ENCODE measurements at regions of chr7 and their contacts with region 1.

Region 1: DNA sequence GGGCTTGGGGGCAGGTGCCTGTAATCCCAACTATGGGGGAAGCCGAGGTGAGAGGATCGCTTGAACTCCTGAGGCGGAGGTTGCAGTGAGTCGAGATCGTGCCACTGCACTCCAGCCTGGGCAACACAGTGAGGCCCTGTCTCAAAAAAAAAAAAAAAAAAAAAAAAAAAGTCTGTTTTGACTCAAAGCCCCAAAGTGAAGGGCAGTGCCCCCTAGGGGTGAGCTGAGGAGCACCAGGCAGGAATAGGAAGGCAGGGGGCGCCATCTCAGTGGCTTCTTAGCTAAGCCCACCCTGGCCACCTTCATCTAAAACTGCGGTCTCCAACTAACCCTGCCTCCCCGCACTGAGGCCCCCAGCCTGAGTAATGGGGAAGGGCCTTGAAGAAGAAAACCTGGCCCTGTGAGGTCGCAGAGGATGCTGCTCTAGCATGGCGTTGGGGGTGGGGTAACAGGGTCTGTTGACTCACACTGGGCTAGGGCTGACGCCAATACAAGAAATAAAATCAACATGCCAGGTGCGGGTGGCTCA is 9.8 kb downstream of the PODXL start:
- DNase-seq: peak; percentile 77 to 81 (median 79)
- H3K4me3 ChIP-seq: no peak overlapping the region
- H3K27ac ChIP-seq: no peak overlapping the region
- H3K4me1 ChIP-seq: peaks cover 0 to 8% (median 5%) of the 10 kb centered on the region in 4 experiments
- H3K27me3 ChIP-seq: peaks cover 0 to 5% (median 0%) of the 10 kb centered on the region in 5 experiments

Region 2: GRCh38 chr7:131431289-131431688 is 115.4 kb before region 1 on chr7:
- CTCF ChIA-PET with region 1: no interaction called
- POLR2A ChIA-PET with region 1: no interaction called
- DNase-seq: no peak
- H3K4me3 ChIP-seq: no peak overlapping the region
- H3K27ac ChIP-seq: no peak overlapping the region
- H3K4me1 ChIP-seq: no peaks in the 10 kb centered on the region
- H3K27me3 ChIP-seq: no peaks in the 10 kb centered on the region

Region 3: GRCh38 chr7:131533151-131533559 is 13.5 kb before region 1 on chr7:
- CTCF ChIA-PET with region 1: interaction called, 19 read pairs
- POLR2A ChIA-PET with region 1: no interaction called
- DNase-seq: no peak
- H3K4me3 ChIP-seq: no peak overlapping the region
- H3K27ac ChIP-seq: no peak overlapping the region
- H3K4me1 ChIP-seq: peaks cover 0 to 2% (median 0%) of the 10 kb centered on the region in 4 experiments
- H3K27me3 ChIP-seq: no peaks in the 10 kb centered on the region

Region 4: DNA sequence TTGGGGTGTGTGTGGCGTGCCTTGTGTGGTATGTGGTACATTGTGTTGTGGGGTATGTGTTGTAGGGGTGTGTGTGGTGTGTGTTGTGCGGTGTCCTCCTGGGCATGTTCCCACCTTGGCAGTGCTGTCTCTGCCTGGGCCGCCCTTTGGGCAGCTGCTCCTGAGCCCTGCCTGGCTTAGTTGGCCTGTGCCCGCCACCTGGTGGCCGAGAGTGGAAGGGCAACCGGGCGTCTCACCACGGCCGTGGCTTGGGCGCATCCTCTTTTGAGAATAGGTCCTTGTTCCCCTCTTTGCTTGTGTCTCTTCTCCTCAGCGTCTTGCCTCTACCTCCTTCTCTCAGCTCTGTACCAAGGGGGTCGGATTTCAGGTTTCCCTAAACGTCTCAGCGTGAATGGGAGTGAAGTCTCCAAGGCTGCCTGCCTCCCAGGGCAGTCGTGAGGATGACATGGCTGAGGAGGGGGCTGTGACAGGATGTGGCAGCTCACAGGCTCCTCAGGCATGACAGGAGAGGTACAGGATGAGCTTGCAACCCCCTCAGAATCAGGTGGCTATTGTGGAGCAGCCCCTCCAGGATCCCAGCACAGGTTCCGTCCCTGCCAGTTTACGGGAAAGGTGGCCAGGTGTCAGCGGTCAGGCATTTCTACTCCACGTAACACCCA is 108.2 kb after region 1 on chr7:
- CTCF ChIA-PET with region 1: interaction called, 41 read pairs
- POLR2A ChIA-PET with region 1: no interaction called
- DNase-seq: peak; percentile 79 to 86 (median 85)
- H3K4me3 ChIP-seq: no peak overlapping the region
- H3K27ac ChIP-seq: no peak overlapping the region
- H3K4me1 ChIP-seq: no peaks in the 10 kb centered on the region
- H3K27me3 ChIP-seq: peaks cover 0 to 2% (median 0%) of the 10 kb centered on the region in 5 experiments